ENCODE measurements at regions of chr16 and their contacts with region 1.

Region 1: GRCh38 chr16:3264137-3265036 is 8.0 kb upstream of the MEFV start:
- DNase-seq: peak in 1 of 2 donors; percentile 96
- H3K4me3 ChIP-seq: peak overlapping the region; percentile 59 to 94
- H3K27ac ChIP-seq: peak overlapping the region; percentile 99
- H3K4me1 ChIP-seq: peaks cover 18% of the 10 kb centered on the region
- H3K27me3 ChIP-seq: no peaks in the 10 kb centered on the region
- CTCF ChIP-seq: no peak
- POLR2A ChIP-seq: peak in 1 of 2 donors; percentile 81

Region 2: GRCh38 chr16:3158471-3159314 is 105.7 kb before region 1 on chr16:
- intact Hi-C with region 1: no loop called
- DNase-seq: peak in 1 of 2 donors; percentile 97
- H3K4me3 ChIP-seq: peak overlapping the region; percentile 60 to 77
- H3K27ac ChIP-seq: peak overlapping the region; percentile 87
- H3K4me1 ChIP-seq: peaks cover 17% of the 10 kb centered on the region
- H3K27me3 ChIP-seq: no peaks in the 10 kb centered on the region
- CTCF ChIP-seq: no peak
- POLR2A ChIP-seq: peak in 1 of 2 donors; percentile 65

Region 3: DNA sequence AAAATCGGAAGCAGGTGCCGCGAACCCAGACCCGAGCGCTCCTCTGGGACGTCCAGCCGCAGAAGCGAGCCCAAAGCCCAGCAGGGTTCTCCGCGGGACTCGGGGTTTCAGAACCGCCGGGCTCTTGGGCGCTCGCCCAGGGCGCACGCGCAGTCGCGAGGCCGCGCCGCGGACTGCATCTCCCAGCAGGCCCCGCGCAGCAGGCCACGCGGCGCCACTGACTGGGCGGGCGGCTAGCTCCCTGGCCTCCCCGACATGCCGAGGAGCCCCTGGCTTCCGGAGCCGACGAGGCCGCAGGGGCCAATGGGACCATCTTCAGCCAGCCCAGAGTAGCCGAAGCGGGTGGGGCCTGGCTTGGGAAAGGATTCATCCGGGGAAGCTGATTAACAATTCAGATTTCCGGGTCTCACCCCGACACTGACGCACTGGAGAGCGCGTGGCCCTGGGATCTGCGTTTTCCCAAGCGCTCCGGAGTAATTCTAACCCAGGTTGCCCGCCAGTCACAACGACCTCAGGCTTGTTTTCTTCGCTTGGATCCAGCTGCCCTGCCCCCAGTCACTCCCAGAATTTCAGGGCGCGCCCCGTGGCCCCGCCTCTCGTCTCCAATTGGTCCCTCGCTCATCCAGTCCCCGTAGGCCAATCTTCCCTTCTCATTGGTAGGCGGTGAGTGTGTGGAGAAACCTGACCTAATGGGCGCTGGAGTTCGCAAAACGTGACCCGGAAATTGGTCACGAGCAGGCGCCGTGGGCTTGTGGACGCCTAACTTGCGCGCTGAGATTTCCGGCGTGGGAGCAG is 18.5 kb after region 1 on chr16 and contains the start of gene ZNF263:
- intact Hi-C with region 1: loop called (anchors 2 kb)
- DNase-seq: peak; percentile 98
- H3K4me3 ChIP-seq: peak within 1 kb of the TSS; percentile 87 to 91
- H3K27ac ChIP-seq: peak within 1 kb of the TSS; percentile 97
- H3K4me1 ChIP-seq: peaks cover 29% of the 10 kb centered on the region
- H3K27me3 ChIP-seq: no peaks in the 10 kb centered on the region
- CTCF ChIP-seq: no peak
- POLR2A ChIP-seq: peak in 1 of 2 donors; percentile 23
- total RNA-seq, gene ZNF263: 29.7 TPM

Measured in vagina (tissue), 2 donors.